ENCODE measurements at regions of chr9 and their contacts with region 1.

Region 1: GRCh38 chr9:17171309-17172094 is 36.7 kb downstream of the CNTLN start:
- DNase-seq: no peak
- H3K27ac ChIP-seq: no peak overlapping the region
- CTCF ChIP-seq: no peak

Region 2: GRCh38 chr9:17204611-17205152 is 33.2 kb after region 1 on chr9:
- CTCF ChIA-PET with region 1: no interaction called
- POLR2A ChIA-PET with region 1: no interaction called
- DNase-seq: no peak
- H3K27ac ChIP-seq: no peak overlapping the region
- CTCF ChIP-seq: no peak

Region 3: GRCh38 chr9:17422994-17423680 is 251.6 kb after region 1 on chr9:
- CTCF ChIA-PET with region 1: no interaction called
- POLR2A ChIA-PET with region 1: no interaction called
- DNase-seq: no peak
- H3K27ac ChIP-seq: no peak overlapping the region
- CTCF ChIP-seq: no peak

Region 4: GRCh38 chr9:17531642-17532254 is 360.2 kb after region 1 on chr9:
- CTCF ChIA-PET with region 1: interaction called, 10 read pairs
- POLR2A ChIA-PET with region 1: no interaction called
- DNase-seq: peak; percentile 53
- H3K27ac ChIP-seq: no peak overlapping the region
- CTCF ChIP-seq: peak; percentile 88